Left lung (tissue), 14 donors: ENCODE measurements at regions of chr4 and their contacts with region 1.

Region 1: DNA sequence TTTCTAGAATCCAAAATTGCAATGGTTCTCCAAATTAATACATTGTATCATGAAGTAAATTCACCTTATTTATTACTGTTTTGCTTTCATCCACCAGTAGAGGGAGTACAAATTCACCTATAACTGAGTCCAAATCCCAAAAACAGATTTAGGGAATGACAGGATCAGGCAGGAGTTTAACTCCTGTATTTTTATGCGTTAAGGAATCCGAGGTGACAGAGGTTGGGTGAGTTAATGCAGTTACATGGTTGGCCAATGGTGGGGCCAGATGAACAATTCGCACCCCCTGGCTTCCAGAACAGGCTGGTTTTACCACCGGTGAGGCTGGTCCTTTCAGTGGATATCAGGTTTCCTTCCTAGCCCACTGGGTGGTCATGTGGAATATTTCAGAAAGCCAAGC is 82.4 kb downstream of the MTNR1A start:
- DNase-seq: peak in 1 of 4 donors; percentile 22
- ATAC-seq: peak; percentile 63
- H3K4me3 ChIP-seq: no peak overlapping the region
- H3K27ac ChIP-seq: no peak overlapping the region
- H3K4me1 ChIP-seq: no peaks in the 10 kb centered on the region
- H3K27me3 ChIP-seq: no peaks in the 10 kb centered on the region
- CTCF ChIP-seq: peak; percentile 18 to 55

Region 2: GRCh38 chr4:186216465-186217024 is 256.4 kb before region 1 on chr4:
- intact Hi-C with region 1: no loop called
- DNase-seq: no peak
- ATAC-seq: no peak
- H3K4me3 ChIP-seq: no peak overlapping the region
- H3K27ac ChIP-seq: no peak overlapping the region
- H3K4me1 ChIP-seq: no peaks in the 10 kb centered on the region
- H3K27me3 ChIP-seq: no peaks in the 10 kb centered on the region
- CTCF ChIP-seq: no peak

Region 3: DNA sequence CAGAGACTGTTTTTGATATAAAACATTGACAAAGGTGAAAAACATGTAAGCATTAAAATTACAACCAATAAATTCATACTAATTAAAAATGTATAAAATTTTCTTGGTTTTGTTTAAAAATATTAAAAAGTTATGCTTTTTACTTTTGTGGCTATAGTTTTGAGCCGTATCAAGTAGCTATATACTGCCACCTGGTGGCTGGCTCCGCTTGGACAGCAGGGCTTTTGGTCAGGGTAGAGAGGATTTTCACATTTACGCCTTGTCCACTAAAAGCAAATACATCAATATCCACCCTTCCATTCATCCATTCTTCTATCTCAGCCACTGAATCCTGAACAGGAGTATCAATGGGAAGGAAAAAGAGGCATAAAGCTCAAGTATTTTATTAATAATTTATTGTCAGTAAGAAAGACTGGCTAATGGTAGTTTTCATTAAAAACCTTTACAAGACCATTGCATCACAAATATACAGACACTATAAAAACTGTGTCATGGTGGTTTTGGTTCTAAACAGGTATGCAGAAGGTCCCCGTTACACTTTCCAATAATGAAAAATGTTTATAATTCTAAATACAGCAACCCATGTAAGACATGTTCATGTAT is 114.6 kb after region 1 on chr4:
- intact Hi-C with region 1: loop called in 1 of 2 experiments (anchors 10 kb)
- DNase-seq: peak in 3 of 4 donors; percentile 62 to 77 (median 63)
- ATAC-seq: peak; percentile 87
- H3K4me3 ChIP-seq: no peak overlapping the region
- H3K27ac ChIP-seq: no peak overlapping the region
- H3K4me1 ChIP-seq: no peaks in the 10 kb centered on the region
- H3K27me3 ChIP-seq: no peaks in the 10 kb centered on the region
- CTCF ChIP-seq: peak; percentile 86 to 90

Region 4: GRCh38 chr4:186621959-186622553 is 149.1 kb after region 1 on chr4:
- intact Hi-C with region 1: no loop called
- DNase-seq: no peak
- ATAC-seq: peak; percentile 23
- H3K4me3 ChIP-seq: no peak overlapping the region
- H3K27ac ChIP-seq: no peak overlapping the region
- H3K4me1 ChIP-seq: no peaks in the 10 kb centered on the region
- H3K27me3 ChIP-seq: no peaks in the 10 kb centered on the region
- CTCF ChIP-seq: no peak